ENCODE measurements at regions of chr14 and their contacts with region 1.

Region 1: DNA sequence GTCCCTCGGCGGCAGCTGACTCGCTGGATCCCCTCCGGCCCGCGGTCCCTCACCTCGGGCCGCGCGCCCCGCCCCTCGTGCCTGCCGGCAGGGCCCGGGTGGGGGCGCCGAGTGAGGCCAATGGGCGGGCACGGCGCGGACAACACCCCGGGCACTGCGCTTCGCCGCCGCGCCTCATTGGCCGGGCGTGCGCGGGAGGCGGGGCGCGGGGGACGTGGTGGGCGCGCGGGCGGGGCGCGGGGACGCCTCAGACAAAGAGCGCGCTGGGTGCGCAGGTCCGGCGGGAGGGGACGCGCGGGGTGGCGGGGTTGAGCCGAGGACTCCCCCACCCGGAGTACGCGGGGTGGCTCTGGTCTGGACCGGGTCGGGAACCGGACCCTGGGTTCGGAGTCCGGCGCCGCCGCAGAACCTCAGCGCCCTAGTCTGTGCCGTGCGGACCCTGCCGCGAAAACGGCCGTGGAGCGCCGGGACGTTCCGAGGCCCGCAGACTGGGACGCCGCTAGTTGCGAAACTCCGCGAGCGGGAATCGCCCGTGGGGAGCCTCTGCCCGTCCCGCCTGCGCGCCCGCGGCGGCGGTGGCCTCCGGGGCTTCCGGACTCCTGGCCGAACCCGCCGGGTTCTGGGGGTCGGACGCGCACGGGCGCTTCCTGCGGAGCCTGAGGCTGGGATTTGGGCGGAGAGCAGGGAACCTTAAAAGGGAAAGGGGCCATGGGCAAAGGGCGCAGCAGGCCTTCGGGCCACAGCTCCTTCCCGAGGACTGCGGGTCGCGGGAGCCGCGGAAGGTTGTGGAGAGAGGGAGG is at the start of gene SLC25A29:
- DNase-seq: peak; percentile 92 to 94
- ATAC-seq: peak; percentile 93
- H3K4me3 ChIP-seq: peak within 1 kb of the TSS; percentile 86 to 87
- H3K27ac ChIP-seq: peak within 1 kb of the TSS in 1 of 2 donors; percentile 39
- H3K4me1 ChIP-seq: no peaks in the 10 kb centered on the region
- H3K27me3 ChIP-seq: no peaks in the 10 kb centered on the region
- total RNA-seq, gene SLC25A29: 38.1 to 45.9 TPM

Region 2: GRCh38 chr14:100375963-100376735 is 69.5 kb after region 1 on chr14:
- intact Hi-C with region 1: loop called (anchors 5 kb)
- DNase-seq: peak; percentile 96 to 97
- ATAC-seq: peak; percentile 98
- H3K4me3 ChIP-seq: peak within 1 kb of the TSS; percentile 46 to 63
- H3K27ac ChIP-seq: peak within 1 kb of the TSS; percentile 66 to 86
- H3K4me1 ChIP-seq: peaks cover 0 to 4% of the 10 kb centered on the region in 2 donors
- H3K27me3 ChIP-seq: no peaks in the 10 kb centered on the region